Activated naive CD4-positive, alpha-beta T cell treated with anti-CD3 and anti-CD28 coated beads for 36 hours (primary cell): ENCODE measurements at regions of chr5 and their contacts with region 1.

Region 1: DNA sequence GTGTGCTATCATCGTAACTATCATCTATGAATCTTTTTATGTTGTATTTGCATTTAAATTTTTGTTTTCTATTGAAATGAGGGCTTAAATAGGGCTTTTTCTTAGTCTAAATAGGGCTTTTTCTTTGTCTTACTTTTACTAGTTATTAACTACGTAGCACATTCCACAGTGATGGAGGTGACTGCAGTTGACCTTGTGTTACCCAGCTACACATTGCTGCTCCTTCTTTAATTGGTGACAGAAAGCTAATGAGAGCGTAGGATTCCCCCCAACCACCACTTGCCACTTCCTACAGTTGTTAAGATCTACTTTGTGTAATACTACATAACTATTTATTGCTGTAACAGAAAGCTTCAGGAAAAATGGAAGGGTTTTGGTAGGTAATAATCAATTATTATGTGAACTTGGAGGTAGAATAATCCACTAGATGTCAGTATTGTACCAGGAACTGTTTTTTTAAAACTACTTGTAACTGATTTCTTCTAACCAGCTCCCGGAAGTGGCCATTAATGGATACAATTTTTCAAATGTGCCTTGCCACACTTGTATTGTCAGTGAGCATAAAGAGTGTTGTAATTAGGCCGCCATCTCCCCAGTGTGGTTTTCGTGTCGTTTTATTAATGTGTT is 18.0 kb downstream of the MTRR start:
- DNase-seq: no peak
- H3K4me3 Mint-ChIP-seq: no peak overlapping the region
- H3K27ac Mint-ChIP-seq: no peak overlapping the region
- H3K4me1 Mint-ChIP-seq: no peaks in the 10 kb centered on the region
- H3K27me3 Mint-ChIP-seq: no peaks in the 10 kb centered on the region

Region 2: DNA sequence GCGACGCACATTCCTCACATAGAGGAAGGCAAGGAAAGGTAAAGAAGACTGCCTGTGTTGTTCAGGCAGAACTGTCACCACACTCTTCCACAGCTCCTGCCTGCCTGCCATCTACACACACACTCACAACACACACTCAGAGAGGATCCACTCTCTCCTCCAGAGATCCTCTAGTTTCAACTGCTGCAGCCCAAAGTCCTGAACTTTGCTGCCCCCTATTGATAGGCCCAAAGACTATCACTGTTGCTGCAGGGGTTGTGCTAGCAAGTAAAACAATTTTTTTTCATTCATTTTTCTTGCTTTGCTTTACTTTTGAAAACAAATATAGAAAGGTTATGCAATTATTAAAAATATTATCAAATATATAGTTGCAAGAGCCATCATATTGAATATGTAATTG is 30.1 kb before region 1 on chr5:
- CTCF ChIA-PET with region 1: interaction called, 12 read pairs
- intact Hi-C with region 1: no loop called
- DNase-seq: peak; percentile 55
- H3K4me3 Mint-ChIP-seq: no peak overlapping the region
- H3K27ac Mint-ChIP-seq: no peak overlapping the region
- H3K4me1 Mint-ChIP-seq: peaks cover 23% of the 10 kb centered on the region
- H3K27me3 Mint-ChIP-seq: no peaks in the 10 kb centered on the region

Region 3: GRCh38 chr5:7868773-7869473 is 18.0 kb before region 1 on chr5 and contains the starts of genes FASTKD3 and MTRR:
- CTCF ChIA-PET with region 1: interaction called, 12 read pairs
- intact Hi-C with region 1: no loop called
- DNase-seq: peak; percentile 91
- H3K4me3 Mint-ChIP-seq: peak within 1 kb of the TSS; percentile 96
- H3K27ac Mint-ChIP-seq: peak within 1 kb of the TSS; percentile 82
- H3K4me1 Mint-ChIP-seq: peaks cover 64% of the 10 kb centered on the region
- H3K27me3 Mint-ChIP-seq: no peaks in the 10 kb centered on the region
- total RNA-seq, gene FASTKD3: 4.0 to 7.7 TPM
- total RNA-seq, gene MTRR: 34.0 to 35.1 TPM

Region 4: GRCh38 chr5:7927466-7928375 is 40.8 kb after region 1 on chr5:
- CTCF ChIA-PET with region 1: interaction called, 10 read pairs
- intact Hi-C with region 1: no loop called
- DNase-seq: peak; percentile 65
- H3K4me3 Mint-ChIP-seq: no peak overlapping the region
- H3K27ac Mint-ChIP-seq: no peak overlapping the region
- H3K4me1 Mint-ChIP-seq: peaks cover 4% of the 10 kb centered on the region
- H3K27me3 Mint-ChIP-seq: peaks cover 7% of the 10 kb centered on the region

Region 5: GRCh38 chr5:9207817-9208418 is 1321.0 kb after region 1 on chr5:
- CTCF ChIA-PET with region 1: no interaction called
- intact Hi-C with region 1: loop called (anchors 5 kb)
- DNase-seq: no peak
- H3K4me3 Mint-ChIP-seq: no peak overlapping the region
- H3K27ac Mint-ChIP-seq: no peak overlapping the region
- H3K4me1 Mint-ChIP-seq: no peaks in the 10 kb centered on the region
- H3K27me3 Mint-ChIP-seq: no peaks in the 10 kb centered on the region